CD8-positive, alpha-beta memory T cell (primary cell): ENCODE measurements at regions of chr12 and their contacts with region 1.

Region 1: GRCh38 chr12:63843721-63844390 is 644 bp upstream of the SRGAP1 start:
- DNase-seq: peak; percentile 63 to 87 (median 76)
- H3K4me3 ChIP-seq: peak overlapping the region; percentile 62
- H3K4me3 Mint-ChIP-seq: peak overlapping the region; percentile 52 to 83 (median 71)
- H3K27ac ChIP-seq: no peak overlapping the region
- H3K27ac Mint-ChIP-seq: peak overlapping the region in 3 of 8 donors; percentile 33 to 84 (median 46)
- H3K4me1 ChIP-seq: peaks cover 7% of the 10 kb centered on the region
- H3K4me1 Mint-ChIP-seq: peaks cover 8 to 11% (median 11%) of the 10 kb centered on the region in 3 donors
- H3K27me3 ChIP-seq: peaks cover 10% of the 10 kb centered on the region
- H3K27me3 Mint-ChIP-seq: peaks cover 10 to 19% of the 10 kb centered on the region in 2 donors

Region 2: DNA sequence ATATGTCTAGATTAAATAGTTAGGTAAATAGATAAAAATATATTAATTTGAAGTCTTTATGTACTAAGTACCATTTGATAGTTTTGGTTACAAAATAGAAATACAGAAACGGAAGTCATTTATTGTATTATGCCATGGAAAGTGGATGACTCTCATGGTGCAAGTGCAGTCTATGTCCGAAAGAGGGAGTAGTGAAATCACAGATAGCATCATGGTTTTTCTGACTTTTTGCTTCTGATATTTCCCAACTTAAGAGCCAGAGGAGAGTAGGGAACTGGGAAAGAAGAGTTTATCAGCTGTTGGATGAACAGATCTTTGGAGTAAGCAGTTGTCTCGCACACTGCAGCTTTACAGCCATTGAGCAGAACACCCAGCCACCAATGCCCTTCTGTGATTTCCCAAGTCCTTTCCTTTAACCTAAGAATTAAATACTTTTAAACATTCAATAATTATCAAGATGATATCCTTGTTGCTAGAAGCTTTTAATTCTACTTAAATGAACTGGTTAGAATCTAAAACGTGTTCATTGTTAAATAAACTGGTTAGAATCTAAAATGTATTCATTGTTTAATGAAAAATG is 17.8 kb before region 1 on chr12:
- CTCF ChIA-PET with region 1: interaction called, 18 read pairs
- POLR2A ChIA-PET with region 1: no interaction called
- DNase-seq: no peak
- H3K4me3 ChIP-seq: no peak overlapping the region
- H3K4me3 Mint-ChIP-seq: no peak overlapping the region
- H3K27ac ChIP-seq: no peak overlapping the region
- H3K27ac Mint-ChIP-seq: no peak overlapping the region
- H3K4me1 ChIP-seq: no peaks in the 10 kb centered on the region
- H3K4me1 Mint-ChIP-seq: peaks cover 6 to 8% (median 6%) of the 10 kb centered on the region in 3 donors
- H3K27me3 ChIP-seq: no peaks in the 10 kb centered on the region
- H3K27me3 Mint-ChIP-seq: peaks cover 10 to 20% of the 10 kb centered on the region in 2 donors

Region 3: GRCh38 chr12:64256166-64256800 is 412.4 kb after region 1 on chr12:
- CTCF ChIA-PET with region 1: interaction called, 32 read pairs
- POLR2A ChIA-PET with region 1: no interaction called
- DNase-seq: peak in 2 of 5 donors; percentile 40 to 46
- H3K4me3 ChIP-seq: no peak overlapping the region
- H3K4me3 Mint-ChIP-seq: no peak overlapping the region
- H3K27ac ChIP-seq: no peak overlapping the region
- H3K27ac Mint-ChIP-seq: no peak overlapping the region
- H3K4me1 ChIP-seq: no peaks in the 10 kb centered on the region
- H3K4me1 Mint-ChIP-seq: peaks cover 0 to 4% (median 0%) of the 10 kb centered on the region in 3 donors
- H3K27me3 ChIP-seq: no peaks in the 10 kb centered on the region
- H3K27me3 Mint-ChIP-seq: peaks cover 1 to 5% of the 10 kb centered on the region in 2 donors